ENCODE measurements at regions of chr16 and their contacts with region 1.

Region 1: GRCh38 chr16:11667824-11668622 is at the start of gene SNN:
- DNase-seq: peak; percentile 93 to 94
- ATAC-seq: peak; percentile 79 to 83 (median 80)
- H3K4me3 ChIP-seq: peak within 1 kb of the TSS; percentile 87
- H3K27ac ChIP-seq: peak within 1 kb of the TSS; percentile 91
- H3K4me1 ChIP-seq: peaks cover 39% of the 10 kb centered on the region
- H3K27me3 ChIP-seq: no peaks in the 10 kb centered on the region
- CTCF ChIP-seq: no peak
- total RNA-seq, gene SNN: 30.3 to 113 (median 83.8) TPM

Region 2: DNA sequence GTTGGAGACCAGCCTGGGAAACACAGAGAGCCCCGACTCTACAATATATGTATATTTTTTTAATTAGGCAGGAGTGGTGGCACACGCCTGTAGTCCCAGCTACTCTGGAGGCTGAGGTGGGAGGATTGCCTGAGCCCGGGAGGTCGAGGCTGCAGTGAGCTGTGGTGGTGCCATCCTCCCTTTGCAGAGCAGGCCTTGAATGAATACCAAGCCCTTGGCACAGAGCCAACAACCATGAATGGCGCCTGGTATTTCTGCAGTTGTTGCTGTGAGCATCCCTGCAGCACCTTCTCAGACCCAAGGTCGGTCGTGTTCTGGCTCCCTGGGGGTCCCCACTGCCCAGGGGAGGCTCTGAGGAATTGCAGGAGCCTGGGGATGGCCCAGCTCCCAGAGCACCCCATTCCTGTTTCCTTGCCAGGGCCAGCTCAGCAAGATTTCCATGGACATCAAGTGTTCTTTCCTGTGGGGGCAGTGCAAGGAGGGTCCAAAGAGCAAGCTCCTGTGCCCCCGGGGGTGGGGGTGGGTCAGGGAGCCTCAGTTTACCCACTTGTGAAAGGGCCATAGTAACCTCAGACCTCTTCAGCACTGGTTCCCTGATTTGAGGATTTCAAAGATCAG is 348.4 kb before region 1 on chr16:
- intact Hi-C with region 1: no loop called
- DNase-seq: no peak
- ATAC-seq: no peak
- H3K4me3 ChIP-seq: no peak overlapping the region
- H3K27ac ChIP-seq: no peak overlapping the region
- H3K4me1 ChIP-seq: no peaks in the 10 kb centered on the region
- H3K27me3 ChIP-seq: peaks cover 0 to 8% (median 0%) of the 10 kb centered on the region in 3 donors
- CTCF ChIP-seq: no peak

Region 3: GRCh38 chr16:11396241-11397048 is 271.6 kb before region 1 on chr16:
- intact Hi-C with region 1: no loop called
- DNase-seq: peak; percentile 75 to 85
- ATAC-seq: peak; percentile 84 to 92 (median 88)
- H3K4me3 ChIP-seq: no peak overlapping the region
- H3K27ac ChIP-seq: no peak overlapping the region
- H3K4me1 ChIP-seq: peaks cover 5% of the 10 kb centered on the region
- H3K27me3 ChIP-seq: no peaks in the 10 kb centered on the region
- CTCF ChIP-seq: peak; percentile 98

Region 4: DNA sequence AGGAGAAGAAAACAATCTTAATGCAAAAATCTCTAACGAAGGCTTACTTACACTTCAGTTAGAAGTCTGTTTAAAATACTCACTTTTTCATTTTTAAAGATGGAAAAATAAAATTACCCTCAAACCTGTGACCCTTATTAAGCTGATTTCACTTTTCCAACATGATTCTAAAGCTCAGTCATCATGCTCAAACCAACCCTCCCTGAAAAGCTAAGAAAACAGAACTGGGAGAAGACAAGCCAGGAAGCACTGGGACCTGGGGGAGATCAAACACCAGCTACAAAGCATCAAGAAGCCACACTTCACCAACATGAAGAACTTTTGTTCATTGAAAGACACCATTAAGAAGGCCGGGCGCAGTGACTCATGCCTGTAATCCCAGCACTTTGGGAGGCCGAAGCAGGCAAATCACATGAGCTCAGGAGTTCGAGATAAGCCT is 170.2 kb before region 1 on chr16:
- intact Hi-C with region 1: loop called in 1 of 2 experiments (anchors 2 kb)
- DNase-seq: peak in 1 of 2 donors; percentile 41
- ATAC-seq: no peak
- H3K4me3 ChIP-seq: no peak overlapping the region
- H3K27ac ChIP-seq: peak overlapping the region; percentile 94
- H3K4me1 ChIP-seq: peaks cover 40% of the 10 kb centered on the region
- H3K27me3 ChIP-seq: no peaks in the 10 kb centered on the region
- CTCF ChIP-seq: no peak

Region 5: GRCh38 chr16:11586856-11587642 is 81.0 kb before region 1 on chr16 and contains the start of gene LITAF:
- intact Hi-C with region 1: no loop called
- DNase-seq: peak; percentile 68 to 72
- ATAC-seq: peak; percentile 73 to 79 (median 78)
- H3K4me3 ChIP-seq: peak within 1 kb of the TSS; percentile 80
- H3K27ac ChIP-seq: peak within 1 kb of the TSS; percentile 82
- H3K4me1 ChIP-seq: peaks cover 10% of the 10 kb centered on the region
- H3K27me3 ChIP-seq: peaks cover 0 to 8% (median 5%) of the 10 kb centered on the region in 3 donors
- CTCF ChIP-seq: no peak
- total RNA-seq, gene LITAF: 8.5 to 60.2 (median 18.5) TPM

Region 6: DNA sequence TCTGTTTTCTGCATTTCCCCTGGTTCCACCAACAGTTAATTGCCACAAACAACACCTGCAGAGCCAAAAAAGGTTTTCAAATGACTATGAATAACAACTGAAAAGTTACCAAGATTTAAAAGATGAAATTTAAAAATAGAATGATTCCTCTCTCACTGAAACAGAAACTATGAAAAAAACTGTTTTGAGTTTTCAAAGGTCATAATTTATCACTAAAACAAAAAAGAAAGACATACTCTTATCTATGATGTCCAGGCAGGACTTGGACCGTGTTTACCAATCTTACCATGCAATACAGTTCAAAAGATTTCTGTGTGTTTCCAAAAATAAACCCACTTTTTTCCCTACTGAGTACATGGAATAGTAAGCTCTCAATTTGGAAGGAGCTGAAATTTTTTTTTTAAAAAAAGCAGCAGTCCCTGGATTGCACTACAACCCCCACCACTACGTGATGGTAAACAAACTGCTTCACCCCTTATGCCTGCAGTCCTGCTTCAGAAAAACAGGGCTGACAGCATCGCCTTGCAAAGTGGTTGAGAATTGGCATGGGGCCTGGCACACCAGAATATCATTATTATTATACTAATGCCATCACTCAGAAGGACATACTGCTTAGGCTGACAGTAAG is 66.1 kb after region 1 on chr16:
- intact Hi-C with region 1: no loop called
- DNase-seq: no peak
- ATAC-seq: peak in 2 of 4 donors; percentile 16 to 17
- H3K4me3 ChIP-seq: no peak overlapping the region
- H3K27ac ChIP-seq: peak overlapping the region; percentile 53
- H3K4me1 ChIP-seq: peaks cover 51% of the 10 kb centered on the region
- H3K27me3 ChIP-seq: no peaks in the 10 kb centered on the region
- CTCF ChIP-seq: no peak

Measured in psoas muscle (tissue), 8 donors.